ENCODE measurements at regions of chr2 and their contacts with region 1.

Region 1: DNA sequence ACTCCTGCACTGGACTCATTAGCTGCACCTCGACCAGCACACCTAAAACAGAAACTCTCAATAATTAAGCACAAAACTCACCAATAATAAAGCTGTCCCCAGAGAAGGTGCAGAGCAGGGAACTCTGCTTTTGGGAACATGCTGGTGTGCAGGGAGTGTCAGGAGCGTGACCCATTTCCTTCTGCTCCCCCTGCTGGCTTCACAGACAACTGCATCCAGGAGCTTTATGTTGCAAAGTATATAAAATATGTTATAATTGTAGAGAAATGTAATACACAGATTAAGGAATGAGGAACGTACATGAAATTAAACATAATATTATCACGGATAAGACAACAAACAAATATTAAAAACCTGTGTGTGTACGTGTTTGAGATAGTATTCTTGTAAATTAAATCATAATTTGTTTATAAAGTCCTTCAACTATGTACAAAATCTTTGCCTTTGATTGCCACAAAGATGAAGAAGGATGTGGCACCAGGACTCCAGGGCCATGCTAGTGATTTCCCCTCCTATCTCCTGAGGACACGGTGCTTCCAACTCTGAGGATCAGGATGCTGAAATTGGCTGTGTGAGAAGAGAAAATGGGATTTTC is 68.6 kb upstream of the MAL start:
- DNase-seq: peak; percentile 51
- H3K4me3 Mint-ChIP-seq: no peak overlapping the region
- H3K27ac Mint-ChIP-seq: no peak overlapping the region
- H3K4me1 Mint-ChIP-seq: no peaks in the 10 kb centered on the region
- H3K27me3 Mint-ChIP-seq: peaks cover 32% of the 10 kb centered on the region

Region 2: GRCh38 chr2:94874277-94875008 is 82.5 kb before region 1 on chr2:
- CTCF ChIA-PET with region 1: interaction called, 19 read pairs
- POLR2A ChIA-PET with region 1: no interaction called
- intact Hi-C with region 1: loop called (anchors 2 kb)
- DNase-seq: peak; percentile 77
- H3K4me3 Mint-ChIP-seq: no peak overlapping the region
- H3K27ac Mint-ChIP-seq: no peak overlapping the region
- H3K4me1 Mint-ChIP-seq: no peaks in the 10 kb centered on the region
- H3K27me3 Mint-ChIP-seq: peaks cover 6% of the 10 kb centered on the region

Region 3: GRCh38 chr2:94939349-94939748 is 17.5 kb before region 1 on chr2:
- CTCF ChIA-PET with region 1: interaction called, 17 read pairs
- POLR2A ChIA-PET with region 1: no interaction called
- intact Hi-C with region 1: no loop called
- DNase-seq: no peak
- H3K4me3 Mint-ChIP-seq: no peak overlapping the region
- H3K27ac Mint-ChIP-seq: no peak overlapping the region
- H3K4me1 Mint-ChIP-seq: no peaks in the 10 kb centered on the region
- H3K27me3 Mint-ChIP-seq: peaks cover 19% of the 10 kb centered on the region

Region 4: DNA sequence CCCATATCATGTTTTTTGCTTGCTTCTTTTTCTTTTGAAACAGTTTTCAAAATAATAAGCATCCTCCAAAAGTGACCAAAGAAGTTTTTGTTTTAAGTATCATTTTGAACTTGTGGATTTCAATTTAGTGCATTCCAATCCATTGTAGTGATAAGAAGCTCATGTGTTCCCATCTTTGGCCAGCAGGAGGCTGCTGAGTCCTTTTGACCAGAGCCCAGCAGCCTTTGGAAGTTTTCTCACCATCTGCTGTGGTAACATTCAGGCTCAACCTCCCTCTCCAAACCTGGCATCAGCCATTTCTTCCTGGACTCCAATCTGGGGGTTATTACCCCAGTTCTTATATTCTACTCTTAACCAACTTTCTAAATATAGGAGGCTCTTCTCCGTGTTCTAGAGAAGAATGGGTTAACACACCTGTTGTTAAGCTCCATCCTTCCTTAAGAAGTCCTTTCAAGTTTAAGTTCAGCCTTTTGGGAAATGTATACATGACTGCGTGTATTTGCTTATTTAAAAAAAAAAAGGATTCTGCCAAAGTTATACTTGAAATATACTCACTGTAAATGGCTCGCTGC is 29.6 kb after region 1 on chr2:
- CTCF ChIA-PET with region 1: interaction called, 14 read pairs
- POLR2A ChIA-PET with region 1: no interaction called
- intact Hi-C with region 1: no loop called
- DNase-seq: peak; percentile 57
- H3K4me3 Mint-ChIP-seq: no peak overlapping the region
- H3K27ac Mint-ChIP-seq: no peak overlapping the region
- H3K4me1 Mint-ChIP-seq: no peaks in the 10 kb centered on the region
- H3K27me3 Mint-ChIP-seq: peaks cover 12% of the 10 kb centered on the region

Region 5: DNA sequence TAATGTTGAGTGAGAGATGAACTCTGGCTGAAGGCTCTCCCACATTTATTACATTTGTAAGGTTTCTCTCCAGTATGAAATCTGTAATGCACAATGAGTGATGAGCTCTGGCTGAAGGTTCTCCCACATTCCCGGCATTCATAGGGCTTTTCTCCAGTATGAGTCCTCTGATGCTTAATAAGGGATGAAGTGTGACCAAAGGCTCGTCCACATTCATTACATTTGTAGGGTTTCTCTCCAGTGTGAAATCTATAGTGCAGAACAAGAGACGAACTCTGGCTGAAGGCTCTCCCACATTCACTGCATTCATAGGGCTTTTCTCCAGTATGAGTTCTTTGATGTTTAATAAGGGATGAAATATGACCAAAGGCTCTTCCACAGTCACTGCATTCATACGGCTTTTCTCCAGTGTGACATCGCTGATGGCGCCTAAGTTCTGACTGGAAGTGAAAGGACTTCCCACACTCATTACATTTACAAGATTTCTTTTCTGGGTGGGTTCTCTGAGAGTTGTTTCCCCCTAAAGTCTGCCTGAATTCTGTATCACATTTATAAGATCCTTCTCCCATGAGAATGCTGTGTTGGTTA is 192.6 kb after region 1 on chr2:
- CTCF ChIA-PET with region 1: no interaction called
- POLR2A ChIA-PET with region 1: no interaction called
- intact Hi-C with region 1: no loop called
- DNase-seq: no peak
- H3K4me3 Mint-ChIP-seq: no peak overlapping the region
- H3K27ac Mint-ChIP-seq: no peak overlapping the region
- H3K4me1 Mint-ChIP-seq: no peaks in the 10 kb centered on the region
- H3K27me3 Mint-ChIP-seq: no peaks in the 10 kb centered on the region